T-cell (primary cell): ENCODE measurements at regions of chr6 and their contacts with region 1.

Region 1: GRCh38 chr6:24933868-24934401 is 1.8 kb downstream of the RIPOR2 start:
- DNase-seq: peak in 17 of 35 experiments; percentile 26 to 82 (median 49)
- ATAC-seq: peak in 3 of 4 experiments; percentile 8 to 23 (median 12)
- H3K4me3 ChIP-seq: peak overlapping the region; percentile 93 to 94
- H3K4me3 Mint-ChIP-seq: peak overlapping the region; percentile 93 to 98 (median 96)
- H3K27ac ChIP-seq: peak overlapping the region; percentile 65
- H3K27ac Mint-ChIP-seq: peak overlapping the region; percentile 97 to 100
- H3K4me1 ChIP-seq: peaks cover 39 to 55% of the 10 kb centered on the region in 2 experiments
- H3K4me1 Mint-ChIP-seq: peaks cover 55 to 73% (median 62%) of the 10 kb centered on the region in 3 donors
- H3K27me3 ChIP-seq: no peaks in the 10 kb centered on the region
- H3K27me3 Mint-ChIP-seq: no peaks in the 10 kb centered on the region

Region 2: DNA sequence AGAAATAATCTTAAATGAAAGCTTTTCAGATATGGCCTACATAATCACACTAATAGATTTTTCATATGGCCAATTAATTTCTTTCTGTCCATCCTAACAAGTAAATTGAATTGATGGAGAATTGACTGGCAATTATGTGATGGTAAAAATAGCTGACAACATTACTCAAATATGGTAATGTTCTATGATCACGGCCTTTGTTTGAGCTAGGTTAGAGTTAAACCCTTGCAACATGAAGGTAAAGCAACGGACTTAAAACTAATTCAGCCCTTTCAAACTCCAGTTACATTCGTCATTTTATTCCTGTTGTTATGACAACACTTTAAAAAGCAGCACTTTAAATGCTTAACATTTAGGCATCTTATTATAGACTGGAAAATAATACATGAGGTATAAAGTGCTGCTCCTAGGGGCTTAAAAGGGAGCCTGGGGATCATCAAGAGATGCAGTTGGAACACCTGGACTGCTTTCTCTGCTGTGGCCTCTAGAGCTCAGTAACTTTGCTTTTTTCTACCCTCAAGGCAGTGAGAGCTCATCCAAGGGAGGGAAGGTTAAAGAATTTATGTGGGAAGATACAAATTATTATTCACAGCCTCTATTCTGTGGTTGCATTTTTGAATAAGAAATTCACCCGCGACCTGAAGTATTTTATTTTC is 45.1 kb before region 1 on chr6:
- CTCF ChIA-PET with region 1: interaction called in 1 of 2 experiments, 10 read pairs
- POLR2A ChIA-PET with region 1: no interaction called
- DNase-seq: no peak
- ATAC-seq: peak in 1 of 4 experiments; percentile 62
- H3K4me3 ChIP-seq: no peak overlapping the region
- H3K4me3 Mint-ChIP-seq: peak overlapping the region in 2 of 3 donors; percentile 41 to 56
- H3K27ac ChIP-seq: peak overlapping the region; percentile 28
- H3K27ac Mint-ChIP-seq: peak overlapping the region; percentile 56 to 88
- H3K4me1 ChIP-seq: peaks cover 45 to 53% of the 10 kb centered on the region in 2 experiments
- H3K4me1 Mint-ChIP-seq: peaks cover 84 to 95% (median 87%) of the 10 kb centered on the region in 3 donors
- H3K27me3 ChIP-seq: no peaks in the 10 kb centered on the region
- H3K27me3 Mint-ChIP-seq: no peaks in the 10 kb centered on the region

Region 3: DNA sequence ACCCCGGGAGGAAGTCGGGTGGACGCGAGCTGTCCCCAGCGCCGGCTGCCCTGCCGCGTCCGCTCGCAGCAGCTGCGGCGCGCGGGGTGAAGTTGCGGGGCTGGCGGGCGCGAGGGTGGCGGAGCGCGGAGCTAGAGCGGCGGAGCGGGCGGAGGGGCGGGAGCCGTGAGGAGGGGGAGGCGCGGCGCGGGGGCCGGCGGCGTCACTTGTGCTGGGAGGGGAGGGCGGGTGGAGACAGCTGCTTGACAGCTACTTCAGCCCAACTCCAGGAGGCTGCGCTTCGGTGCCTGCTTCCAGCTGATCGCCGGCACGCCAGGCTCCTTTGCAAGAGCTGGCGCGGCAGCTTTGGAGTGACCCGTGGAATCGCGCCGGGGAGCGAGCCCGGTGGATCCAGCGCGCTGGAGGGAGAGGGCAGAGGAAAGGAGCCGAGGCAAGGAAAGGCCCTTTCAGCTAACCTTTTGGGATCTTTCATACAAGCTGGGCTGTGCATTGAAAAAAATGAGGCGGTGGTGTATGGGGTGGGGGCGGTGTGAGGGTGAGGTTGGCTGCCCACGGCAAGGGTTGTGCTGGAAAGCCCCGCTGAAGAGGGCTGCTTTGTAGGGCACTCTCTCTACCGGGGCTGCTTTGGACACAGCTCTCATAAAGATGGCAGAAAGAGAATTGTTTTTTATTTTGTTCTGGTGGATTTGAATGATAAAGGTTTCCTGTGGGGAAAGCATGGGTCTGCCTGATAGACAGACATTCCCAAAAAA is 22.8 kb before region 1 on chr6:
- CTCF ChIA-PET with region 1: interaction called, 9 to 88 read pairs
- POLR2A ChIA-PET with region 1: interaction called, 4 to 5 read pairs
- DNase-seq: peak in 30 of 35 experiments; percentile 29 to 72 (median 48)
- ATAC-seq: peak; percentile 32 to 50 (median 36)
- H3K4me3 ChIP-seq: peak overlapping the region; percentile 57 to 60
- H3K4me3 Mint-ChIP-seq: peak overlapping the region; percentile 88 to 93 (median 90)
- H3K27ac ChIP-seq: peak overlapping the region; percentile 79
- H3K27ac Mint-ChIP-seq: peak overlapping the region; percentile 98 to 99
- H3K4me1 ChIP-seq: peaks cover 74 to 87% of the 10 kb centered on the region in 2 experiments
- H3K4me1 Mint-ChIP-seq: peaks cover 96 to 100% (median 97%) of the 10 kb centered on the region in 3 donors
- H3K27me3 ChIP-seq: no peaks in the 10 kb centered on the region
- H3K27me3 Mint-ChIP-seq: no peaks in the 10 kb centered on the region

Region 4: GRCh38 chr6:24949020-24949569 is 15.2 kb after region 1 on chr6:
- CTCF ChIA-PET with region 1: interaction called, 10 to 107 read pairs
- POLR2A ChIA-PET with region 1: interaction called, 12 to 20 read pairs
- DNase-seq: peak in 34 of 35 experiments; percentile 39 to 82 (median 60)
- ATAC-seq: peak; percentile 69 to 81 (median 78)
- H3K4me3 ChIP-seq: peak overlapping the region; percentile 24 to 60
- H3K4me3 Mint-ChIP-seq: peak overlapping the region; percentile 55 to 76 (median 60)
- H3K27ac ChIP-seq: peak overlapping the region; percentile 76
- H3K27ac Mint-ChIP-seq: peak overlapping the region; percentile 96 to 98
- H3K4me1 ChIP-seq: peaks cover 63 to 68% of the 10 kb centered on the region in 2 experiments
- H3K4me1 Mint-ChIP-seq: peaks cover 75 to 82% (median 78%) of the 10 kb centered on the region in 3 donors
- H3K27me3 ChIP-seq: no peaks in the 10 kb centered on the region
- H3K27me3 Mint-ChIP-seq: no peaks in the 10 kb centered on the region

Region 5: GRCh38 chr6:25017932-25018567 is 84.1 kb after region 1 on chr6:
- CTCF ChIA-PET with region 1: interaction called, 8 to 50 read pairs
- POLR2A ChIA-PET with region 1: interaction called in 1 of 2 experiments, 5 read pairs
- DNase-seq: peak; percentile 55 to 92 (median 80)
- ATAC-seq: peak; percentile 76 to 95 (median 91)
- H3K4me3 ChIP-seq: no peak overlapping the region
- H3K4me3 Mint-ChIP-seq: peak overlapping the region in 2 of 3 donors; percentile 34 to 63
- H3K27ac ChIP-seq: peak overlapping the region; percentile 33
- H3K27ac Mint-ChIP-seq: peak overlapping the region; percentile 87 to 91
- H3K4me1 ChIP-seq: peaks cover 17 to 24% of the 10 kb centered on the region in 2 experiments
- H3K4me1 Mint-ChIP-seq: peaks cover 39 to 48% (median 44%) of the 10 kb centered on the region in 3 donors
- H3K27me3 ChIP-seq: no peaks in the 10 kb centered on the region
- H3K27me3 Mint-ChIP-seq: no peaks in the 10 kb centered on the region

Region 6: GRCh38 chr6:25070547-25071366 is 136.8 kb after region 1 on chr6:
- CTCF ChIA-PET with region 1: interaction called in 1 of 2 experiments, 10 read pairs
- POLR2A ChIA-PET with region 1: interaction called in 1 of 2 experiments, 3 read pairs
- DNase-seq: peak; percentile 62 to 93 (median 76)
- ATAC-seq: peak; percentile 91 to 94 (median 94)
- H3K4me3 ChIP-seq: no peak overlapping the region
- H3K4me3 Mint-ChIP-seq: peak overlapping the region; percentile 28 to 59 (median 56)
- H3K27ac ChIP-seq: peak overlapping the region; percentile 61
- H3K27ac Mint-ChIP-seq: peak overlapping the region; percentile 87 to 89
- H3K4me1 ChIP-seq: peaks cover 0 to 5% of the 10 kb centered on the region in 2 experiments
- H3K4me1 Mint-ChIP-seq: peaks cover 4 to 9% (median 5%) of the 10 kb centered on the region in 3 donors
- H3K27me3 ChIP-seq: no peaks in the 10 kb centered on the region
- H3K27me3 Mint-ChIP-seq: no peaks in the 10 kb centered on the region